Activated T-helper 1 cell treated with anti-CD3 and anti-CD28 coated beads, Interleukin-12 subunit alpha, Interleukin-12 subunit beta, Interleukin-2, Interleukin-4 antibody, amounts not matched to agents 30 ng/mL and 10 ng/mL and 1 ng/mL, durations not matched to agents 14 hours and 24 hours and 36 hours (primary cell): ENCODE measurements at regions of chr11 and their contacts with region 1.

Region 1: DNA sequence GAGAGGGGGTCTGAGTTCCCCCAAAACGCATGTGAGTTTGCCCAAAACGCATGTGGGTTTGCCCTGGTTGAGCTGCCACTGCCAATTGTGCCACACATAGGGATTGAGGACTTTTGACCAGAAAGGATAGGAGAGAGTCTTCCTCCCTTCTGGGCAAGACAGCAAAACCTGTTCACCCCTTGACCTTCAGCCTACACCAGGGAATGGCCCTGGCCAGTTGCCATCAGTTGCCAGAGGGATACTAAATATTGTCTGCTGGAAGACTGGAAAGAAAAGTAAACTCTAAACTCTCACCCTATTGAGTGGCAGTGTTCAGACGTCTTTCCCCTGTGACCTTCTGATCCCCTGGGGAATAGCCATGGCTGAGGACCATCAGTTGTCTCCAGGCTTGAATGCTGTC is 363.8 kb downstream of the DLG2 start:
- DNase-seq: no peak
- H3K4me3 Mint-ChIP-seq: no peak overlapping the region
- H3K27ac Mint-ChIP-seq: no peak overlapping the region
- H3K4me1 Mint-ChIP-seq: no peaks in the 10 kb centered on the region
- H3K27me3 Mint-ChIP-seq: no peaks in the 10 kb centered on the region

Region 2: DNA sequence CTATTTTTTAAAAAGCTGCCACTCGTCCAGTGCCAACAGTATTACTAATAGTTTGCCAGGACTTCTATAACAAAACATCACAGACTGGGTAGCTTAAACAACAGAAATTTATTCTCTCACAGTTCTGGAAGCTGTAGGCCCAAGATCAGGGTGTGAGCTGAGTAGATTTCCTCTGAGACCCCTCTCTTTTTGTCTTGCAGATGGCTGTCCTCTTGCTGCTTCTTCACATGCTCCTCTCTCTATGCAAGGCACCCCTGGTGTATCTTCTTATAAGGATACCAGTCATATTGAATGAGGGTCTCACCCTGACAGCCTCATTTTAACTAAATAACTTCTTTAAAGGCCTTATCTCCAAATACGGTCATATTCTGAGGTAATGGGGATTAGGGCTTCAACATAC is 27.1 kb before region 1 on chr11:
- intact Hi-C with region 1: no loop called
- DNase-seq: no peak
- H3K4me3 Mint-ChIP-seq: no peak overlapping the region
- H3K27ac Mint-ChIP-seq: no peak overlapping the region
- H3K4me1 Mint-ChIP-seq: no peaks in the 10 kb centered on the region
- H3K27me3 Mint-ChIP-seq: no peaks in the 10 kb centered on the region

Region 3: DNA sequence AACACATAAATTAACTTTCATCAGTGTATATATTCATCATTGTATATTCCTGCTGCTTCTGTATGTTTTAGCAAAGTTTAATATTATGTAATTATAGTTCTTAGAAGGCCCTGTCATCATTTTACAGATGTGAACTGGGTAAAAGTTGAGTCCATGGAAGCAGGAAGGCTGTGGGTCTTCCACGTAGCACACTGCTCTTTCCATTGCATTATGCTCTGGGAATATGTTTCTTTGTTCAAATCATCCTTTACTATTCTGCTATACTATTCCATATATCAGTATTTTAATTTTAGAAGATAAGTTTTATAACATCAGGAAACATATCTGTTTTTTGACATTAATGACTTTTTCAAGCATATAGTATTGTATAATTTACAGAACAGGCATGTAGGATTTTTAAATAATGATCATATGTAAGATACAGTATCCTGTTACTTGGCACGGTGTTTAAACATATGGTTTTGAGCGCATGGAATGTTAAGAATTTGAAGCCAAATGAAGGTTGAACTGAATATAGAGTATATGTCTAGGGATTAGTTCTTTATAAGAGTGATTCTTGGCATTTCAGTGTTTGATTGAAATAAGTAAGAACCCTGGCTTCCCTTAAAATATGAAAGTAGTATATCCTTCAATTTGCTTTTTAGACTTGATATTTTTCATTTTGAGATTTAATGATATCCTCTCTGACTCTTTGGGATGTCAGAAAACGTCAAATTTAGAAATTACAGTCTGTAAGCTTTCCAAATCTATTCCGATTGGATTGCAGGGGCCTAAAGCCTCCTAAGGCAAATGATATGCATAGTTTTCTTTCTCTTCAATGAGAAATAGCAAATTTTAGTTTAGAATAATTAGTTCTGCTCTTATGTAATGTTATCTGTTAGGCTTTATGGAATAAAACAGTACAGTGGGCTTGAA is 1119.9 kb after region 1 on chr11:
- intact Hi-C with region 1: loop called (anchors 5 kb)
- DNase-seq: no peak
- H3K4me3 Mint-ChIP-seq: no peak overlapping the region
- H3K27ac Mint-ChIP-seq: no peak overlapping the region
- H3K4me1 Mint-ChIP-seq: no peaks in the 10 kb centered on the region
- H3K27me3 Mint-ChIP-seq: no peaks in the 10 kb centered on the region